Esophagus muscularis mucosa (tissue), 4 donors: ENCODE measurements at regions of chr13 and their contacts with region 1.

Region 1: DNA sequence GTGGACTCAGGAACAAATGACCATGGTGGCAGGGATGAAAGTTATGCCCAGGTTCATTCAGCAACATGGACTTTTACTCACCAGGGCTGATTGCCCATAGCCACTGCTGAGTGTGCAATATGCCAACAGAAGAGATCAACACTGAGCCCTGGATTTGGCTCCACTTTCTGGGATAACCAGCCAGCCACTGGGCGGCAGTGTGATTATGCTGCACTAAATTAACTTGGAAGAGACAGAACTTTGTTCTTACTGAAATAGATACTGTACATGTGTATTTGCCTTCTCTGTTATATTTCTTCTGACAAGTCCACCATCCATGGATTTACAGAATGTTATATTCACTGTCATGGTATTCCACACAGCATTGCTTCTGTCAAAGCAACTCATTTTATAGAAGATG is 257.4 kb downstream of the TDRD3 start:
- DNase-seq: no peak
- H3K4me3 ChIP-seq: no peak overlapping the region
- H3K27ac ChIP-seq: no peak overlapping the region
- H3K4me1 ChIP-seq: no peaks in the 10 kb centered on the region
- H3K27me3 ChIP-seq: no peaks in the 10 kb centered on the region
- CTCF ChIP-seq: peak in 2 of 3 experiments; percentile 23 to 46
- EP300 ChIP-seq: no peak
- POLR2A ChIP-seq: no peak

Region 2: GRCh38 chr13:60075850-60076249 is 578.6 kb before region 1 on chr13:
- intact Hi-C with region 1: no loop called
- DNase-seq: no peak
- H3K4me3 ChIP-seq: no peak overlapping the region
- H3K27ac ChIP-seq: no peak overlapping the region
- H3K4me1 ChIP-seq: no peaks in the 10 kb centered on the region
- H3K27me3 ChIP-seq: no peaks in the 10 kb centered on the region
- CTCF ChIP-seq: no peak
- EP300 ChIP-seq: no peak
- POLR2A ChIP-seq: no peak

Region 3: DNA sequence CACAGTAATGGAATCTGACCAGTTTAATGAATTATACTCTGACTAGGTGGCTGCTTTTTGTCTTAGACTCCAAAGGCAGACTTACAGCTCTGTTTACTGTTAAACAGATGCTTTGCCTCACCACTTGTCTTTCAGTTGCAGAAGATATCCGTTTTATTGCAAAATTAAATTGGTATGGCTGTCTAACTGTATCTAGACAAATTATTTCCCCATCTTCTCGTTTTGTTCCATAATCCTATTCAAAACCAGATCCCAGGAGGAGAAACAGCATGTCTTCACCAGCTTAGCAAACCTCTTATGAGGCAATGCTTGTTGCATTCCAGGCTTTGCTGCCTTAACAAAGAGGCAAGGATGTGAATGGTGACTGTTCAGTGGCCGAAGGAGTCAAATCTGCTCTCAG is 41.8 kb before region 1 on chr13:
- intact Hi-C with region 1: no loop called
- DNase-seq: no peak
- H3K4me3 ChIP-seq: no peak overlapping the region
- H3K27ac ChIP-seq: no peak overlapping the region
- H3K4me1 ChIP-seq: no peaks in the 10 kb centered on the region
- H3K27me3 ChIP-seq: no peaks in the 10 kb centered on the region
- CTCF ChIP-seq: no peak
- EP300 ChIP-seq: no peak
- POLR2A ChIP-seq: no peak

Region 4: GRCh38 chr13:61410669-61411297 is 756.4 kb after region 1 on chr13:
- intact Hi-C with region 1: loop called (anchors 10 kb)
- DNase-seq: no peak
- H3K4me3 ChIP-seq: peak overlapping the region in 1 of 4 donors; percentile 7
- H3K27ac ChIP-seq: no peak overlapping the region
- H3K4me1 ChIP-seq: peaks cover 9 to 28% (median 19%) of the 10 kb centered on the region in 4 donors
- H3K27me3 ChIP-seq: peaks cover 0 to 36% (median 0%) of the 10 kb centered on the region in 4 donors
- CTCF ChIP-seq: peak; percentile 18 to 47 (median 42)
- EP300 ChIP-seq: no peak
- POLR2A ChIP-seq: no peak

Region 5: DNA sequence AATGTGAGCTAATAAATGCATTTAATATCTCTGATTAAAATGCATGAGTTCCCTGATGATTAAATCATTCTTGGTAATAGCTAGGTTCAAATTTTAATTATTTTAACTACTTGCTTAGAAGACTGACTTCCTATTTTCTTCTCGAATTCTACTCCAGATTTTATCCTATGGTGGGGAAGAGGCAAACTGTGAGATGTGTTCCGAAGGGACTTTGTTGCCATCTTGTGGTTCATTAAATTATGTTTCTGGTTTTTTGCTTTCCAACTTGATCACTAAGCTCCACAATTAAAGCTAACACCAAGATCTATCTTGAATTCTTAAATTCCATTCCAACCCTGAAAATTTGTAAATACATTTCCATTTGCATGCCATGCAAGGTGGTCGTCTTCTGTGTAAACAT is 1299.7 kb after region 1 on chr13:
- intact Hi-C with region 1: loop called (anchors 10 kb)
- DNase-seq: no peak
- H3K4me3 ChIP-seq: no peak overlapping the region
- H3K27ac ChIP-seq: no peak overlapping the region
- H3K4me1 ChIP-seq: no peaks in the 10 kb centered on the region
- H3K27me3 ChIP-seq: no peaks in the 10 kb centered on the region
- CTCF ChIP-seq: peak in 2 of 3 experiments; percentile 31 to 37
- EP300 ChIP-seq: no peak
- POLR2A ChIP-seq: no peak